CD8-positive, alpha-beta T cell (primary cell): ENCODE measurements at regions of chr18 and their contacts with region 1.

Region 1: DNA sequence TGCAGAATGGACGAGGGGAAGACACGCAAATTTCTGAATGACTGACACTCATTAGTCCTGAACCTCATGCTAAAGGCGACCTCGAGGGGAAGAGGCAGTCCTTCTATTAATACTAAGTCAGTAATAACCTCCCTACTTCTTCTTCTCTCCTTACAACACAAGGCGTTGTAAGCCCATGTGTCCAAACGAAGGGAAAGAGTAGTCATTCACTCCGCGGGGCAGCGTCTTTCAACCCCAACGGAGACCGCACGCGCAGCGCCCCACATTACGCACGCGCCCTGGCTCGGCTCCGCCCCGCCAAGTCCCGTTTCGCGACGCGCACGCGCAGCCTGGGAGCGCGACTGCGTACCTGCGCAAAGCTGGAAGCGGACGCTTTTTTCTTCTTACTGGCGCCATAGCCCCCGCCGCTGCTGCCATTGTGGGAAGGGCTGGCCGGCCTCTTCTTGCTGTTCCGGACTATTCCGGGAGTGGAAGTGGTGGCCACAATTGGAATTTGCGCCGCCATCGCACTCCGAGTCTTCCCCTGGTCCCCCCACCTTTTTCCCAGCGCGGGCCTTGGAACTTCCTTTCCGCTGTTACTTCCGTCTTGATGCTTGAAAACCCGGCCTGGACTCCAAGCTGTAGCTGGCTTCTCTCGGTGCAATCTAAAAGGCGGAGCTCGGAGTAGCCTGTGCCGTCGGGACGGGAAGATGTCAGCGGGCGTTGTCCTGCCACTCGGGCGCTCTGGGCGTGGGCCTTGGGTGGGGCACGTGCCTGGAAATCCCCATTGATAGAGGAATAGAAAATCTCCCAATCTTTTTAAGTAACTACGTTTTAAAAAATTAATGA is at the start of gene INO80C:
- DNase-seq: peak; percentile 80 to 97 (median 92)
- ATAC-seq: peak; percentile 92
- H3K4me3 ChIP-seq: peak within 1 kb of the TSS; percentile 83 to 86
- H3K4me3 Mint-ChIP-seq: peak within 1 kb of the TSS; percentile 93
- H3K27ac ChIP-seq: peak within 1 kb of the TSS; percentile 95 to 97
- H3K27ac Mint-ChIP-seq: peak within 1 kb of the TSS; percentile 98
- H3K4me1 ChIP-seq: peaks cover 17% of the 10 kb centered on the region
- H3K4me1 Mint-ChIP-seq: peaks cover 32% of the 10 kb centered on the region
- H3K27me3 ChIP-seq: no peaks in the 10 kb centered on the region
- H3K27me3 Mint-ChIP-seq: no peaks in the 10 kb centered on the region
- CTCF ChIP-seq: no peak
- total RNA-seq, gene INO80C: 20.1 to 22.1 TPM

Region 2: GRCh38 chr18:35029770-35030169 is 467.8 kb before region 1 on chr18:
- CTCF ChIA-PET with region 1: no interaction called
- POLR2A ChIA-PET with region 1: no interaction called
- intact Hi-C with region 1: loop called in 1 of 2 experiments (anchors 5 kb)
- DNase-seq: peak in 2 of 9 experiments; percentile 58 to 76
- ATAC-seq: peak; percentile 60
- H3K4me3 ChIP-seq: peak overlapping the region; percentile 48 to 52
- H3K4me3 Mint-ChIP-seq: peak overlapping the region; percentile 76
- H3K27ac ChIP-seq: peak overlapping the region; percentile 84 to 92
- H3K27ac Mint-ChIP-seq: peak overlapping the region; percentile 95
- H3K4me1 ChIP-seq: peaks cover 56% of the 10 kb centered on the region
- H3K4me1 Mint-ChIP-seq: peaks cover 68% of the 10 kb centered on the region
- H3K27me3 ChIP-seq: no peaks in the 10 kb centered on the region
- H3K27me3 Mint-ChIP-seq: no peaks in the 10 kb centered on the region
- CTCF ChIP-seq: peak; percentile 7

Region 3: DNA sequence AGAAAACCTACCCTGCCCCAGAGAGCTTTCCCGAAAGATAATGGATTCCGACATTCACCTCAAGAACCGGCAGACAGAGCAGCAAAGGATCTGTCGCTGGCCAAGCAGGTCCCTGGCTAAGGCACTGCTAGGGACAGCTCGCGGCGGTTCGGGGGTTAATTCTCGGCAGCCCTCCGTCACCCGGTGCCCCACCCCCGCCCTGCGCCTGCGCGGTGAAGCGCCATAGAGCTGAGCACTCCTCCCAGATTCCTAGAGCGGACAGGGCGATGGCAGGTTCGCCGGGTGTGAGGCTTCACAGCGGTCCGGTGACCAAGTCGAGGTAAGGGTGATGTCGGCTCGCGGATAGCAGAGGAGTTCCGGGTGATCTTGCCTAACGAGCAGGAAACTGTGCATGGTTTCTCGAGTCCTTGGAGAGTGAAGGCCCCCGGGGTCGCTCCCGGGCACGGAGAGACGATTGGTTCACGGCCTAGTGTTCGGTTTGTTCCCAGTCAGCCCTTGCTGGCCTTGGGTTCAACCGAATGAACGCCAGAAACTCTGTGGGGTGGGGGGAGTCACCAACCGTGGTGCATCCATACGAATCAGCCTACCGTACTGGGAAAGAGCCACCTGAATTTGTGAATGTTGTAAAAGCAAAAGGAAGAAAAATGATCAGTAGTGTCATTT is 207.4 kb before region 1 on chr18 and contains the start of gene ZSCAN30:
- CTCF ChIA-PET with region 1: no interaction called
- POLR2A ChIA-PET with region 1: interaction called, 8 read pairs
- intact Hi-C with region 1: loop called (anchors 1 kb)
- DNase-seq: peak; percentile 92 to 98 (median 96)
- ATAC-seq: peak; percentile 94
- H3K4me3 ChIP-seq: peak within 1 kb of the TSS; percentile 78 to 82
- H3K4me3 Mint-ChIP-seq: peak within 1 kb of the TSS; percentile 99
- H3K27ac ChIP-seq: peak within 1 kb of the TSS; percentile 69 to 85
- H3K27ac Mint-ChIP-seq: peak within 1 kb of the TSS; percentile 99
- H3K4me1 ChIP-seq: peaks cover 17% of the 10 kb centered on the region
- H3K4me1 Mint-ChIP-seq: peaks cover 70% of the 10 kb centered on the region
- H3K27me3 ChIP-seq: no peaks in the 10 kb centered on the region
- H3K27me3 Mint-ChIP-seq: no peaks in the 10 kb centered on the region
- CTCF ChIP-seq: no peak
- total RNA-seq, gene ZSCAN30: 6.2 to 6.3 TPM

Region 4: DNA sequence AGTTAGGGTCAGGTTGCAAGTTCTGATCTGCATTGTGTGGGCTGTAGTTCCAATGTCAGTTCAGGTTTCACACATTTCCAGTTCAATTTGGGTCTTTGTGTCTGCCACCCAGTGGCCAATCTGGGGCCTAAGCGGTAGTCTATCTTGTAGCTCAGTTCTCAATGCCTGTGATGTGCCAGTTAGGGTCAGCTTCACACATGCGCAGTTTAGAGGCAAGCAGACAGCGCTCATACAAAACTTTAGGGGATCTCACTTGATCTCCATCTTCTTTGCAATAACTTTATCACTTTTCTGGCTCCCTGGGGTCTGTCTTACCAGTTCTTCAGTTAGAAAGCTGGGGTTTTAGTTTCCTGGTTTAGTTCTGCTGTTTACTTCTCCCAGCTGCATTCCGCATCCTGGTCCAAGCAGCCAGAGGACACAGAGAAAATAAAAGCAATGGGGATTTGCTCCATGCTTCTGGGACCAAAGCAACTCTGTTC is 142.4 kb before region 1 on chr18:
- CTCF ChIA-PET with region 1: no interaction called
- POLR2A ChIA-PET with region 1: no interaction called
- intact Hi-C with region 1: no loop called
- DNase-seq: peak; percentile 19 to 83 (median 59)
- ATAC-seq: peak; percentile 98
- H3K4me3 ChIP-seq: no peak overlapping the region
- H3K4me3 Mint-ChIP-seq: no peak overlapping the region
- H3K27ac ChIP-seq: no peak overlapping the region
- H3K27ac Mint-ChIP-seq: no peak overlapping the region
- H3K4me1 ChIP-seq: no peaks in the 10 kb centered on the region
- H3K4me1 Mint-ChIP-seq: peaks cover 4% of the 10 kb centered on the region
- H3K27me3 ChIP-seq: no peaks in the 10 kb centered on the region
- H3K27me3 Mint-ChIP-seq: peaks cover 2% of the 10 kb centered on the region
- CTCF ChIP-seq: peak; percentile 50

Region 5: DNA sequence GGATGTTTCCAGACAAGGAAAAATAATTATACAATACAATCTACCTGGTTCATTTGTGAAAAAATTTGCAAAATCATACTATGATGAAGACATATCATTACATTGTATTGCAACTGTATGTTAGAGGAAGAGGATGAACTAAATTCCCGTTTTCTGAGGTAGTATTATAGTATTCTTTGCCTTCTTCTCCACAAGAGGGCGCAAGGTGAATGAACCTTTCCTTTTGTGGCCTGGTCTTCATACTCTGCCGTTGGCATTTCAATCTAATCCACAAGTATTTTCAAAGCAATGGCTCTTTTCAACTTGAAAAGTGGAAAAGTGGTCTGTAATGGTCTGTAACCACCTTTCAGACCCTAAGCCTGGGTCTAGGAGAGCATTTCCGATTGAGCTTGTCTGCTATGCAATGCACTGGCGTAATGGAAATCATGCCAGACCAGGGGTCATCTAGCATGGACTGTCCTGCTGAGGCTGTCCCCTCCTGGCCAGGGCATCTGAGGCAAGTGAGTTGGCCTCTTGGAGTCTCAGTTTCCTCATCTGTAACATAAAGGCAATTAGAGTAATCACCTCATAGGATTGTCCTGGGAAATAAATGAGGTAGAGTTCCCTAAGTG is 89.6 kb before region 1 on chr18:
- CTCF ChIA-PET with region 1: interaction called, 4 read pairs
- POLR2A ChIA-PET with region 1: no interaction called
- intact Hi-C with region 1: loop called in 1 of 2 experiments (anchors 1 kb)
- DNase-seq: peak in 6 of 9 experiments; percentile 10 to 75 (median 41)
- ATAC-seq: peak; percentile 81
- H3K4me3 ChIP-seq: no peak overlapping the region
- H3K4me3 Mint-ChIP-seq: no peak overlapping the region
- H3K27ac ChIP-seq: no peak overlapping the region
- H3K27ac Mint-ChIP-seq: no peak overlapping the region
- H3K4me1 ChIP-seq: peaks cover 6% of the 10 kb centered on the region
- H3K4me1 Mint-ChIP-seq: peaks cover 11% of the 10 kb centered on the region
- H3K27me3 ChIP-seq: no peaks in the 10 kb centered on the region
- H3K27me3 Mint-ChIP-seq: no peaks in the 10 kb centered on the region
- CTCF ChIP-seq: peak; percentile 91

Region 6: DNA sequence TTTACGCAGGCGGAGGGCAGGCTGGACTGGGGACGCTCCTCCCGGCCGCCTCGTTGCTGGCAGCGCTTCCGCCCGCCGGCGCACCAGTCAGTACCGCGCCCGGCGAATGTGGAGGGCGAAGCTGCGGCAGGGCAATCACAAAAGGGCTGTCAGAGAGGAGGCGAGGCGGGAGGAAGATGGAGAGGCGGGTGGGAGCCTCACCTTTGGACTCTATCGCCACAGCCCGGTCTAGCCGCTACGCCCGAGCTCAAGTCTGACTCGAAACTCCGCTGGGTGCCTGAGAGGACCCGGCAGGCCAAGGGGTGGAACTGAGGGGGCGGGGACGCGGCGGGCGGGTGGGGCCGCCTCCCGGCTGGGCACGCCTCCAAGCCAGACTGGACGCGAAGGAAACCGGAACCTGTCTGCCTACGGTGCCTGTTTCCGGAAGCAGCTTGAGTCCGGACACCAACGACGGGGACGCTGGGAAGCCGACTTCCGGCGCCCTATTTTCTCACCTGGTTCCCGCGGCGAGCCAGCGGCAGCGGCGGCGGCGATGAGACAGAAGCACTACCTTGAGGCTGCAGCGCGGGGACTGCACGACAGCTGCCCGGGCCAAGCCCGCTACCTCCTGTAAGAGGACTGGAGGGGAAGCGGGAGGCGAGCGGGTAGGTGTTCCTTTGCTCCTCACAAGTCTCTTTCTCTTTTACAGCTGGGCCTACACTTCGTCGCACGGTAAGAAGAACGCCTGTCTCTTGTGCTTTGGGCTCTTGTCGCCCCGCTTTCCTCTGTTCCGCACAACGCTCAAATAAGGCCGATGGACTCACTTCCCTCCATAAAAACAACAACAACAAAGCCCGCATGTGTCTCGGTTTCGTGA is 474.8 kb after region 1 on chr18 and contains the start of gene RMP24:
- CTCF ChIA-PET with region 1: no interaction called
- POLR2A ChIA-PET with region 1: interaction called, 4 read pairs
- intact Hi-C with region 1: loop called (anchors 1 to 5 kb)
- DNase-seq: peak; percentile 88 to 97 (median 93)
- ATAC-seq: peak; percentile 84
- H3K4me3 ChIP-seq: peak within 1 kb of the TSS; percentile 60 to 89
- H3K4me3 Mint-ChIP-seq: peak within 1 kb of the TSS; percentile 94
- H3K27ac ChIP-seq: peak within 1 kb of the TSS; percentile 57 to 90
- H3K27ac Mint-ChIP-seq: peak within 1 kb of the TSS; percentile 98
- H3K4me1 ChIP-seq: peaks cover 35% of the 10 kb centered on the region
- H3K4me1 Mint-ChIP-seq: peaks cover 65% of the 10 kb centered on the region
- H3K27me3 ChIP-seq: no peaks in the 10 kb centered on the region
- H3K27me3 Mint-ChIP-seq: no peaks in the 10 kb centered on the region
- CTCF ChIP-seq: no peak

Region 7: GRCh38 chr18:36828630-36829361 is 1331.2 kb after region 1 on chr18 and contains the starts of genes KIAA1328 and TPGS2:
- CTCF ChIA-PET with region 1: no interaction called
- POLR2A ChIA-PET with region 1: no interaction called
- intact Hi-C with region 1: loop called (anchors 2 to 5 kb)
- DNase-seq: peak; percentile 75 to 94 (median 85)
- ATAC-seq: peak; percentile 90
- H3K4me3 ChIP-seq: peak within 1 kb of the TSS; percentile 99
- H3K4me3 Mint-ChIP-seq: peak within 1 kb of the TSS; percentile 81
- H3K27ac ChIP-seq: peak within 1 kb of the TSS; percentile 70 to 71
- H3K27ac Mint-ChIP-seq: peak within 1 kb of the TSS; percentile 93
- H3K4me1 ChIP-seq: peaks cover 22% of the 10 kb centered on the region
- H3K4me1 Mint-ChIP-seq: peaks cover 42% of the 10 kb centered on the region
- H3K27me3 ChIP-seq: no peaks in the 10 kb centered on the region
- H3K27me3 Mint-ChIP-seq: no peaks in the 10 kb centered on the region
- CTCF ChIP-seq: peak; percentile 58
- total RNA-seq, gene KIAA1328: 6.9 to 7.0 TPM
- total RNA-seq, gene TPGS2: 14.5 to 16.4 TPM